ENCODE measurements at regions of chr9 and their contacts with region 1.

Region 1: DNA sequence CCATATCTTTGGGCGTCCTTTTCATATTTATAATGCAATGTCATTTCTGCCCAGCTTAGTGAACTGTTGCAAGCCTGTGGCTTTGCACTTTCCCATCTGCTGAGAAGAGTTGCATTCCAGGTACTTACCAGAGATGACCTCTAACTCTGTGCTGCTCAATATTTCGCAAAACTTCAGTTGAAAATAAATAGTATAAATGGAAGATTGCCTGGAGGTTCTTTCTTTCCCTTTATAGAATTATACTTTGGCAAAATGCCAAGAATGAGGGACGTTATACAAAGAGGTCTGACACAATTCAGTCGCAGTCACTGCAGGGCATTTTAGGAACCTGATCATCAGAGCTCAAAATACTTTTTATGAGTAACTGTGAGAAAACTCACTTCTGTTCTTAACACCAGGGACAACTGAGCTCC is 18.9 kb upstream of the VLDLR start:
- DNase-seq: peak; percentile 49
- ATAC-seq: peak; percentile 83
- H3K4me3 ChIP-seq: no peak overlapping the region; the same call in 1 of the 2 replicates
- H3K27ac ChIP-seq: peak overlapping the region; percentile 13
- H3K4me1 ChIP-seq: no peaks in the 10 kb centered on the region; the same call in 1 of the 2 replicates
- H3K27me3 ChIP-seq: no peaks in the 10 kb centered on the region
- CTCF ChIP-seq: no peak
- EP300 ChIP-seq: no peak
- POLR2A ChIP-seq: no peak
- RAD21 ChIP-seq: no peak

Region 2: GRCh38 chr9:2241836-2242741 is 360.6 kb before region 1 on chr9:
- CTCF ChIA-PET with region 1: no interaction called
- POLR2A ChIA-PET with region 1: no interaction called
- RAD21 ChIA-PET with region 1: no interaction called
- SMC1A ChIA-PET with region 1: no interaction called
- in situ Hi-C with region 1: no loop called
- intact Hi-C with region 1: no loop called
- DNase-seq: no peak
- ATAC-seq: peak; percentile 94
- H3K4me3 ChIP-seq: peak overlapping the region; percentile 61
- H3K27ac ChIP-seq: no peak overlapping the region
- H3K4me1 ChIP-seq: peaks cover 7% of the 10 kb centered on the region
- H3K27me3 ChIP-seq: no peaks in the 10 kb centered on the region
- CTCF ChIP-seq: no peak
- EP300 ChIP-seq: 0 out of 4 replicates have a peak, but pooled peaks of 1 of the 2 experiments have one; percentile 19
- POLR2A ChIP-seq: peak; percentile 47; the same call in 1 of the 2 replicates
- RAD21 ChIP-seq: no peak

Region 3: GRCh38 chr9:2570615-2571479 is 31.9 kb before region 1 on chr9:
- CTCF ChIA-PET with region 1: no interaction called
- POLR2A ChIA-PET with region 1: no interaction called
- RAD21 ChIA-PET with region 1: interaction called, 3 read pairs
- SMC1A ChIA-PET with region 1: no interaction called
- in situ Hi-C with region 1: no loop called
- intact Hi-C with region 1: loop called (anchors 2 kb)
- DNase-seq: peak; percentile 78
- ATAC-seq: peak; percentile 96
- H3K4me3 ChIP-seq: no peak overlapping the region
- H3K27ac ChIP-seq: no peak overlapping the region
- H3K4me1 ChIP-seq: no peaks in the 10 kb centered on the region
- H3K27me3 ChIP-seq: no peaks in the 10 kb centered on the region
- CTCF ChIP-seq: no peak
- EP300 ChIP-seq: peak in 1 of 2 experiments; percentile 8; a peak in 1 of 4 replicates
- POLR2A ChIP-seq: no peak
- RAD21 ChIP-seq: no peak

Region 4: DNA sequence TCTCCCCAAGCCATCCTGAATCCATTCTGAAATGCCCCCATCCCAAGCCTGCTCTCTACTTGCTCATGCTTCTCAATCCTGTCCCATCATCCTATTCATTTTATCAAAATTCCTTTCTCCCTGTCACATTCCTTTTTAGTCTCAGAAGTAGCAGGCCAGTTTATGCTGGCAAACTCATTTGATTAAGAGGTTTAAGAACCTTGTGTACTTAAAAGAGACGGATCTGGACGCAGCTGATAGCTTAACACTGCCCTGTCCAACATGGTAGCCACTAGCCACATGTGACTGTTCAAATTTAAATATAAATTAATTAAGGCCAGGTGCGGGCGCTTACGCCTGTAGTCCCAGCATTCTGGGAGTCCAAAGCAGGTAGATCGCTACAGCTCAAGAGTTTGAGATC is 109.0 kb after region 1 on chr9:
- CTCF ChIA-PET with region 1: no interaction called
- POLR2A ChIA-PET with region 1: no interaction called
- RAD21 ChIA-PET with region 1: no interaction called
- SMC1A ChIA-PET with region 1: no interaction called
- in situ Hi-C with region 1: no loop called
- intact Hi-C with region 1: no loop called
- DNase-seq: no peak
- ATAC-seq: no peak
- H3K4me3 ChIP-seq: no peak overlapping the region
- H3K27ac ChIP-seq: no peak overlapping the region
- H3K4me1 ChIP-seq: no peaks in the 10 kb centered on the region; the same call in 1 of the 2 replicates
- H3K27me3 ChIP-seq: no peaks in the 10 kb centered on the region
- CTCF ChIP-seq: no peak
- EP300 ChIP-seq: no peak
- POLR2A ChIP-seq: no peak
- RAD21 ChIP-seq: no peak